ENCODE measurements at regions of chr4 and their contacts with region 1.

Region 1: GRCh38 chr4:87235020-87235671 is 14.7 kb upstream of the KLHL8 start:
- DNase-seq: no peak
- ATAC-seq: no peak

Region 2: DNA sequence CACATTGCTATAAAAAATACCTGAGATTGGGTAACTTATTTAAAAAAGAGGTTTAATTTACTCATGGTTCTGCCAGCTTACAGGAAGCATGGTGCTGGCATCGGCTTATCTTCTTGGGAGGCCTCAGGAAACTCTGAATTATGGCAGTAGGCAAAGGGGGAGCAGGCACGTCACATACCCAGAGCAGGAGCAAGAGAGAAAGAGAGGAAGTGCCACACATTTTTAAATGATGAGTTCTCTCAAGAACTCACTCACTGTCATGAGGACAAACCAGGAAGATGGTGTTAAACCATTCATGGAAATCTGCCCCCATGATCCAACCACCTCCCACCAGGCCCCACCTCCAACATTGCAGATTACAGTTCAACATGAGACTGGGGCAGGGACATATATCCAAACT is 310.3 kb before region 1 on chr4:
- intact Hi-C with region 1: loop called (anchors 5 kb)
- DNase-seq: no peak
- ATAC-seq: no peak

Region 3: GRCh38 chr4:87093443-87094123 is 141.6 kb before region 1 on chr4:
- intact Hi-C with region 1: no loop called
- DNase-seq: no peak
- ATAC-seq: peak; percentile 78

Region 4: GRCh38 chr4:87150498-87151261 is 84.5 kb before region 1 on chr4:
- intact Hi-C with region 1: loop called (anchors 5 kb)
- DNase-seq: no peak
- ATAC-seq: peak; percentile 75

Region 5: GRCh38 chr4:87278335-87278794 is 43.2 kb after region 1 on chr4:
- intact Hi-C with region 1: no loop called
- DNase-seq: no peak
- ATAC-seq: no peak

Measured in left ventricle myocardium superior (tissue), 1 donor.